ENCODE measurements at regions of chr3 and their contacts with region 1.

Region 1: DNA sequence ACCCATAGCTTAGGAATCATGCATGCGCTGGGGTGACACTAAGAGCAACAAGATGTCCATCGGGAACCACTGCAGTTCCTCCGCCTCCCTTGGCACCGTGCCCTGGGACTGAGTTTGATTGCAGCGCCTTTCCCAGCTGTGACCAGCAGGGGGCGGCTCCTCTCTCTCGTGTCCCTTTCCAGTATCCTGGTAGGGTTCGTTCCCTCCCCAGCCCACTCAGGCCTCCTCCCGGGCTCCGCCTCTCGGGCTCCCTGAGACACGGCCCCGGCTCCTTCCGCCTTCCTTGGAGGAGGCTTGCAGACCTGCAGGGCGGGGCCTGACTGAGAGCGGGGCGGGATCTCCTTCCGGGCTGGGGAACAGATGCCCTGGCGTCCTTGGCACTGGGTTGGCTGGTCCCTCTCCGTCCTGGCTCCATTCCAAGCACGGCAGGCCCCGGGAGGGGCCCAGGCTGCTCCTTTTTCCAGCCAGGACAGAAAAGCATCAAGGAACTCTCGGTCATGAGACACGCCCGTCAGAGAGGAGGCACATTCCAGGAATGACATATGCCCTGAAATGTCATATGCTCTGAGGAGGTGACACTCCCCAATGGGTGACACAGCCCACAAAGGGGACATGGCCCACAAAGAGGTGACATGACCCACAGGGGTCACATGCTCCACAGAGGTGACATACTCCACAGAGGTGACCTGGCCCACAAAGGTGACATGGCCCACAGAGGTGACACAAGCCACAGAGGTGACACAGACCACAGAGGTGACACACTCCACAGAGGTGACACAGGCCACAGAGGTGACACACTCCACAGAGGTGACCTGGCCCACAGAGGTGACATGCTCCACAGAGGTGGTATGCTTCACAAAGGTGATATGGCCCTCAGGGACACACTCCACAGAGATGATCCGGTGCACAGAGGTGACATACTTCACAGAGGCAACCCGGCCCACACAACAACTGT is 79.0 kb downstream of the ABHD5 start:
- DNase-seq: peak; percentile 75 to 98 (median 94)

Region 2: GRCh38 chr3:43540624-43541023 is 229.1 kb before region 1 on chr3:
- intact Hi-C with region 1: loop called (anchors 10 kb)
- DNase-seq: no peak

Region 3: GRCh38 chr3:43855674-43856299 is 86.0 kb after region 1 on chr3:
- intact Hi-C with region 1: loop called (anchors 5 kb)
- DNase-seq: peak; percentile 40 to 93 (median 66)

Measured in posterior cingulate gyrus (tissue), 11 donors.